ENCODE measurements at regions of chr15 and their contacts with region 1.

Region 1: GRCh38 chr15:40565333-40566238 is 744 bp upstream of the CCDC32 start:
- DNase-seq: no peak
- H3K4me3 ChIP-seq: peak overlapping the region; percentile 58 to 77
- H3K27ac ChIP-seq: peak overlapping the region; percentile 74
- H3K4me1 ChIP-seq: peaks cover 8% of the 10 kb centered on the region
- H3K27me3 ChIP-seq: no peaks in the 10 kb centered on the region
- CTCF ChIP-seq: no peak
- POLR2A ChIP-seq: no peak

Region 2: GRCh38 chr15:40593588-40594428 is 28.2 kb after region 1 on chr15 and contains the start of gene KNL1:
- intact Hi-C with region 1: loop called (anchors 1 kb)
- DNase-seq: peak; percentile 96 to 97
- H3K4me3 ChIP-seq: peak within 1 kb of the TSS; percentile 47 to 55
- H3K27ac ChIP-seq: peak within 1 kb of the TSS; percentile 86
- H3K4me1 ChIP-seq: peaks cover 5% of the 10 kb centered on the region
- H3K27me3 ChIP-seq: no peaks in the 10 kb centered on the region
- CTCF ChIP-seq: no peak
- POLR2A ChIP-seq: no peak
- total RNA-seq, gene KNL1: 3.4 TPM